HepG2 (cell line): ENCODE measurements at regions of chr9 and their contacts with region 1.

Region 1: DNA sequence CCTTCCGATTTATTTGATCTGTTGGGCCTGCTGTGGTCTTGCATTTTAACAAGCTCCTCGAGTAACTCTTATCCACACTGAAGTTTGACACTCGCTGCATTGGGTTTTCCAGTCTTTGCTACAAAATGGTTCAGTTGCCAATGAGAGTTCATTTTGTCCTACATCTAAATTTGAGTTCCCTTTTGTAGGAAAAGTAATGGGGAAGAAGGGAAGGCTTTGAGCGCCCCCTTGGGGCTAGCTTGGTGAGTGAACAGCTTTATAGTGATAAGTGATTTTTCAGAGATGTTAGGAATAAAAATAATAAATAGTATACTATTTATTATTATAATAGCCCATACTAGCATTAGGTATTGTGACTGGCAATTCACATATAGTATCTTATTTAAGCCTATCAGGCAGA is 89.9 kb upstream of the GNAQ start:
- DNase-seq: peak; percentile 36
- ATAC-seq: no peak; the same call in 2 of the 3 replicates
- H3K4me3 ChIP-seq: no peak overlapping the region
- H3K27ac ChIP-seq: no peak overlapping the region
- H3K4me1 ChIP-seq: no peaks in the 10 kb centered on the region
- H3K27me3 ChIP-seq: 0 out of 5 replicates have a peak, but pooled peaks cover 0 to 2% of the 10 kb centered on the region in 2 experiments
- CTCF ChIP-seq: peak; percentile 52
- EP300 ChIP-seq: no peak
- POLR2A ChIP-seq: no peak
- RAD21 ChIP-seq: 0 out of 2 replicates have a peak, but pooled peaks have one; percentile 21

Region 2: DNA sequence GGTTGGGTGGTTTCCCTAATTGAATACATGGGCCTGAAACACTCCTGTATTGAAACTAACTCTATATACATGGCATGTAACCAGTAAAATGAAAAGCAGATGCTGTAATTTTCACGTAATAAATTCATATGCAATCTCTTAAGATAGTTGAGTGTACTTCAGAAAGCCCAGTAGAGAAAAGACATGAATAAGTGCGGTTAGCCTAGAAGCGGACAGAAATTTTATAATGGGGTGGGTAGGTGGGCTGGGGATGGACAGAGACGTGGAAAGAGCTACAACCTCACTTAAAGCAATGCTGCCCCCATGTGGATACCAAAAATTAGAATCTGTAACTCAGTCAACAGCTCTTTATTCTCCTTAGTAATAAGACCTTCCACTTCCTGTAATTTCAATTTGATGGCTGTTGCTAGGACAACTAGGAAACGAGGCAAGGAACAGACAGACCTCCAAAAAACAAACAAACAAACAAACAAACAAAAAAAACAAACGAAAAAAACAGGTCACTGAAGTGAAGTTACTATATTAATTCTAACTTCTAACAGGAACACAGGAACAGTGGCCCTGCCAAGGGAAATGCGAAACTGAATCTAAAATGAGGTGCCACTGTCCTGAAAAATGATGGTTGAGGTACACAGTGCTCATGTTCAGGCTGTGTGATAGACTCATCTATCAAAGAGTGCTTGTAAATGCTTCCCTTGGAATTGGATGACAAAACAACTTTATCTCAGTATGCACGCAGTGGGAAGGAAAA is 370.0 kb before region 1 on chr9:
- CTCF ChIA-PET with region 1: no interaction called
- POLR2A ChIA-PET with region 1: no interaction called
- in situ Hi-C with region 1: no loop called
- intact Hi-C with region 1: loop called (anchors 10 kb)
- DNase-seq: peak; percentile 35
- ATAC-seq: peak; percentile 79
- H3K4me3 ChIP-seq: no peak overlapping the region
- H3K27ac ChIP-seq: no peak overlapping the region
- H3K4me1 ChIP-seq: no peaks in the 10 kb centered on the region
- H3K27me3 ChIP-seq: no peaks in the 10 kb centered on the region
- CTCF ChIP-seq: peak; percentile 68
- EP300 ChIP-seq: no peak
- POLR2A ChIP-seq: no peak
- RAD21 ChIP-seq: 0 out of 2 replicates have a peak, but pooled peaks have one; percentile 27

Region 3: DNA sequence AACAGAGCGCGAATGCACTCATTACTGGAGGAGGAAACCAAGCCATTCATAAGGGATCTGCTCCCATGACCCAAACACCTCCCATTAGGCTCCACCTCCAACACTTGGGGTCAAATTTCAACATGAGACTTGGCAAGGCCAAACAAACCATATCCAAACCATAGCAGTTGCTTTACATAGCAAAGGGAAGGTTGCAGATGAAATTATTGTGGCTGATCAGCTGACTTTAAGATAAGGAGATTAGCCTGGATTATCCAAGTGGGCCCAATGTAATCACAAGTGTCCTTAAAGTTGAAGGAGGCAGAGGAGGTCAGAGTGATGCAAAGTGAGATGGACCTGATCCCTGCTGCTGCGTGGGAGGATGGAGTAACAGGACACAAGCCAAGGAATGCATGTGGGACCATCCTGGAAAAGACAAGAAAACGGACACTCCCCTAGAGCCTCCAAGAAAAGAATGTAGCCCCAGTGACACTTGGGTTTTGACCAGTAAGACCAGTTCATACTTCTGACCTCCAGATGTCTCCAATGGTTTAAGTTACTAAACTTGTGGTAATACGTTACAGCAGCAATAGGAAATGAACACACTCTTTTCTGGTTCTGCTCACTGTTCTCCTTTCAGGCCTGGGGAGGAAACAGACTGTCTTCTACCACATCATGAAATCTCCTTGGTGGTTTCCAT is 257.1 kb before region 1 on chr9:
- CTCF ChIA-PET with region 1: no interaction called
- POLR2A ChIA-PET with region 1: no interaction called
- in situ Hi-C with region 1: no loop called
- intact Hi-C with region 1: no loop called
- DNase-seq: no peak
- ATAC-seq: no peak
- H3K4me3 ChIP-seq: no peak overlapping the region
- H3K27ac ChIP-seq: no peak overlapping the region
- H3K4me1 ChIP-seq: peaks cover 10% of the 10 kb centered on the region
- H3K27me3 ChIP-seq: no peaks in the 10 kb centered on the region
- CTCF ChIP-seq: no peak
- EP300 ChIP-seq: no peak
- POLR2A ChIP-seq: no peak
- RAD21 ChIP-seq: no peak

Region 4: DNA sequence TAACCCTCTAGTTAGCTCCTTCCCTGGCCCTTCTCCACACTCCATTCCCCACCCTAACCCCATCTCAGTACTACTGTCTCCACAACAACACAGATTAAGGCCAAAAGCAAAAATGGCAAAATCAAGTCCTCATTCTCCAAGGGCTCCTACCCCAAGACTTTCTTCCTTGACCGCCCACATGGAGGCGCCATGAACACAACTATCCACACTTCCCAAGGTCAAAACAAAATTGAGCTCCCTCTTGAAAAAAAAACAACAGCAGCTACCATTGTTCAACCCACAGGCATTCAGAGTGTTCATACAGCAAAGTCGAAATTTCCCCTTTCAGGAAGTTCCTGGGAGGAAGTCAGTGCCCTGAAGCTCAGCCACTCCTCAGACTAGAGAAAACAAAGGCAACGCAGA is 144.3 kb before region 1 on chr9:
- CTCF ChIA-PET with region 1: interaction called, 6 read pairs
- POLR2A ChIA-PET with region 1: no interaction called
- in situ Hi-C with region 1: no loop called
- intact Hi-C with region 1: loop called (anchors 2 kb)
- DNase-seq: peak; percentile 79
- ATAC-seq: peak; percentile 85
- H3K4me3 ChIP-seq: no peak overlapping the region
- H3K27ac ChIP-seq: peak overlapping the region; percentile 19
- H3K4me1 ChIP-seq: peaks cover 32% of the 10 kb centered on the region
- H3K27me3 ChIP-seq: no peaks in the 10 kb centered on the region
- CTCF ChIP-seq: peak; percentile 76
- EP300 ChIP-seq: no peak; a peak in 1 of 4 replicates
- POLR2A ChIP-seq: no peak
- RAD21 ChIP-seq: peak; percentile 75

Region 5: DNA sequence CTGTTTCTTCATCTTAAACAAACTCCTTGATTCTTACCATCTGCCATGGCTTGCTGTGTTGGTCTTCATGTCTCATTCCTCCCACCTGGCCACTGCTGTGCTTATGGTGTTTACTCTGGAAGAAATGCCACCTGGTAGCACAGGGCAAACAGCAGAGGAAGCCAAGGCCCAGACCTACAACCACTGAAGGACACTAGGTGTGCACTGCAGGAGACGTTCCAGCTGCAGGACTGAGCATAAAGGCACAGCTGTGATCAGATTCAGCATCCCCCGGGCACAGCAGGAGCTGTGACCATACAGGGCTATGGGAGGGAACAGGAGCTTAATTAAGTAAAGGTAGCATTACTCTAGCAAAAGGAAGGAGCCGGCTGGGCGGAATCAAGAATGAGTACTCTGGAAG is 77.3 kb before region 1 on chr9:
- CTCF ChIA-PET with region 1: no interaction called
- POLR2A ChIA-PET with region 1: no interaction called
- in situ Hi-C with region 1: no loop called
- intact Hi-C with region 1: loop called (anchors 2 kb)
- DNase-seq: no peak
- ATAC-seq: no peak
- H3K4me3 ChIP-seq: no peak overlapping the region
- H3K27ac ChIP-seq: no peak overlapping the region
- H3K4me1 ChIP-seq: no peaks in the 10 kb centered on the region
- H3K27me3 ChIP-seq: peaks cover 0 to 7% of the 10 kb centered on the region in 2 experiments; a peak in 1 of 5 replicates
- CTCF ChIP-seq: no peak
- EP300 ChIP-seq: no peak
- POLR2A ChIP-seq: no peak
- RAD21 ChIP-seq: no peak